Caco-2 (cell line): ENCODE measurements at regions of chr5 and their contacts with region 1.

Region 1: GRCh38 chr5:34656001-34656699 is at the start of gene RAI14:
- DNase-seq: peak; percentile 90 to 93
- H3K4me3 ChIP-seq: peak within 1 kb of the TSS; percentile 94
- H3K4me3 Mint-ChIP-seq: peak within 1 kb of the TSS; percentile 69
- H3K27ac Mint-ChIP-seq: peak within 1 kb of the TSS; percentile 48
- H3K4me1 ChIP-seq: peaks cover 12% of the 10 kb centered on the region; the same call in 1 of the 2 replicates
- H3K4me1 Mint-ChIP-seq: peaks cover 14% of the 10 kb centered on the region
- H3K27me3 ChIP-seq: no peaks in the 10 kb centered on the region
- H3K27me3 Mint-ChIP-seq: no peaks in the 10 kb centered on the region
- CTCF ChIP-seq: no peak
- total RNA-seq, gene RAI14: 71.5 and 73.9 TPM in 2 replicates

Region 2: DNA sequence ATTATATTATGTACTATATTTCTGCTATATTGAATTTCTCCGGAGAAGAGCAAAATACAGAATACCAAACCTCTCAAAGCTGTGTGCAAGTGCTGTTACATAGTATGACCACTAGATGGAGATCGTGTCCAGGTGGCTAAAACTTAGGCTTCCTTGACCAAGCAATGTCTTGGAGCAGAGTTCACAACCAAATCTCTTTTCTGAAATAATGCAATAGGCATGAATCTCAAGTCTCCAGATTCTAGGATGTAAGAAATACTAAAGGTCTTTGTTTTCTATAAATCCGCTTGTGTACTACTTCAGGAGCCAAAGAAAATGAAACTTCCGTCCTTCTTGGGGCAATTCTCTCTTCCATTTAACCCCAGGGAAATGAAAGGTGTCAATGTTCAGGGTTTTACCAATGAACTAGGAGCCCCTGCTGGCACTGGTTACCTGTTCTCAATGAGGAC is 181.6 kb before region 1 on chr5:
- CTCF ChIA-PET with region 1: no interaction called
- POLR2A ChIA-PET with region 1: no interaction called
- intact Hi-C with region 1: loop called (anchors 5 kb)
- DNase-seq: peak in 1 of 2 experiments; percentile 59
- H3K4me3 ChIP-seq: no peak overlapping the region
- H3K4me3 Mint-ChIP-seq: no peak overlapping the region
- H3K27ac Mint-ChIP-seq: no peak overlapping the region
- H3K4me1 ChIP-seq: 0 out of 2 replicates have a peak, but pooled peaks cover 7% of the 10 kb centered on the region
- H3K4me1 Mint-ChIP-seq: peaks cover 7% of the 10 kb centered on the region
- H3K27me3 ChIP-seq: no peaks in the 10 kb centered on the region
- H3K27me3 Mint-ChIP-seq: no peaks in the 10 kb centered on the region
- CTCF ChIP-seq: peak; percentile 91 to 95

Region 3: GRCh38 chr5:34609951-34610441 is 46.2 kb before region 1 on chr5:
- CTCF ChIA-PET with region 1: no interaction called
- POLR2A ChIA-PET with region 1: no interaction called
- intact Hi-C with region 1: no loop called
- DNase-seq: no peak
- H3K4me3 ChIP-seq: no peak overlapping the region
- H3K4me3 Mint-ChIP-seq: no peak overlapping the region
- H3K27ac Mint-ChIP-seq: no peak overlapping the region
- H3K4me1 ChIP-seq: no peaks in the 10 kb centered on the region
- H3K4me1 Mint-ChIP-seq: peaks cover 6% of the 10 kb centered on the region
- H3K27me3 ChIP-seq: no peaks in the 10 kb centered on the region
- H3K27me3 Mint-ChIP-seq: no peaks in the 10 kb centered on the region
- CTCF ChIP-seq: no peak

Region 4: DNA sequence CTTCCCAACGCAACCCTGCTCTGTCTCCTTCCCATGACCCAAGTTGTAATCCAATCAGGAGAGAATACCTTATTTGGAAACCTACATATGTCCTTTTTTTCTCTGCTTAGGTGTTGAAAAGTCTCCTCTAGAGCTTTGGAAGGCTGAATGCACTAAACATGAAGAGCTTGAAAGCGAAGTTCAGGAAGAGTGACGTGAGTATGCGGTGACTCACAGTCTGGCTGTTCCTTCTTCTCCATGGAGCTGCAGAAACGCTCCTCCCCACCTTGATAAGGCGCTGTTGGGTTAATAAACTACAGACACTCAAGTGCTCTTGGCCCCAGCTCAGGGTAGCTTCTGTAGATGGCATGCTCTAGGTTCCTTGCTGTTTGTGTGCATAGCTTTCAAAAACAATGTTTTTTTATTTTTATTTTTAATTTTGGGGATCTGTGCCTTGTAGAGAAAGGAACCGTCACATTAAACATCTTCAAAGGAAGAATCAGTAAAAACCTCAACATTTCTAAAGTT is 30.7 kb after region 1 on chr5:
- CTCF ChIA-PET with region 1: interaction called, 3 read pairs
- POLR2A ChIA-PET with region 1: interaction called, 15 read pairs
- intact Hi-C with region 1: loop called (anchors 1 kb)
- DNase-seq: peak; percentile 85 to 90
- H3K4me3 ChIP-seq: no peak overlapping the region
- H3K4me3 Mint-ChIP-seq: peak overlapping the region; percentile 67
- H3K27ac Mint-ChIP-seq: peak overlapping the region; percentile 88
- H3K4me1 ChIP-seq: peaks cover 53% of the 10 kb centered on the region
- H3K4me1 Mint-ChIP-seq: peaks cover 43% of the 10 kb centered on the region
- H3K27me3 ChIP-seq: no peaks in the 10 kb centered on the region
- H3K27me3 Mint-ChIP-seq: no peaks in the 10 kb centered on the region
- CTCF ChIP-seq: no peak

Region 5: GRCh38 chr5:34699155-34700077 is 43.3 kb after region 1 on chr5:
- CTCF ChIA-PET with region 1: no interaction called
- POLR2A ChIA-PET with region 1: no interaction called
- intact Hi-C with region 1: loop called (anchors 1 kb)
- DNase-seq: peak; percentile 83 to 87
- H3K4me3 ChIP-seq: no peak overlapping the region
- H3K4me3 Mint-ChIP-seq: peak overlapping the region; percentile 68
- H3K27ac Mint-ChIP-seq: peak overlapping the region; percentile 62
- H3K4me1 ChIP-seq: peaks cover 65% of the 10 kb centered on the region
- H3K4me1 Mint-ChIP-seq: peaks cover 50% of the 10 kb centered on the region
- H3K27me3 ChIP-seq: no peaks in the 10 kb centered on the region
- H3K27me3 Mint-ChIP-seq: no peaks in the 10 kb centered on the region
- CTCF ChIP-seq: no peak

Region 6: GRCh38 chr5:34731435-34732232 is 75.5 kb after region 1 on chr5:
- CTCF ChIA-PET with region 1: no interaction called
- POLR2A ChIA-PET with region 1: no interaction called
- intact Hi-C with region 1: no loop called
- DNase-seq: no peak
- H3K4me3 ChIP-seq: no peak overlapping the region
- H3K4me3 Mint-ChIP-seq: no peak overlapping the region
- H3K27ac Mint-ChIP-seq: peak overlapping the region; percentile 57
- H3K4me1 ChIP-seq: peaks cover 18% of the 10 kb centered on the region
- H3K4me1 Mint-ChIP-seq: no peaks in the 10 kb centered on the region
- H3K27me3 ChIP-seq: no peaks in the 10 kb centered on the region
- H3K27me3 Mint-ChIP-seq: no peaks in the 10 kb centered on the region
- CTCF ChIP-seq: no peak

Region 7: GRCh38 chr5:34756781-34757624 is 100.9 kb after region 1 on chr5:
- CTCF ChIA-PET with region 1: interaction called, 8 read pairs
- POLR2A ChIA-PET with region 1: no interaction called
- intact Hi-C with region 1: loop called (anchors 1 kb)
- DNase-seq: peak; percentile 66 to 77
- H3K4me3 ChIP-seq: no peak overlapping the region
- H3K4me3 Mint-ChIP-seq: peak overlapping the region; percentile 40
- H3K27ac Mint-ChIP-seq: peak overlapping the region; percentile 50
- H3K4me1 ChIP-seq: peaks cover 22% of the 10 kb centered on the region
- H3K4me1 Mint-ChIP-seq: peaks cover 38% of the 10 kb centered on the region
- H3K27me3 ChIP-seq: no peaks in the 10 kb centered on the region
- H3K27me3 Mint-ChIP-seq: no peaks in the 10 kb centered on the region
- CTCF ChIP-seq: no peak

Region 8: DNA sequence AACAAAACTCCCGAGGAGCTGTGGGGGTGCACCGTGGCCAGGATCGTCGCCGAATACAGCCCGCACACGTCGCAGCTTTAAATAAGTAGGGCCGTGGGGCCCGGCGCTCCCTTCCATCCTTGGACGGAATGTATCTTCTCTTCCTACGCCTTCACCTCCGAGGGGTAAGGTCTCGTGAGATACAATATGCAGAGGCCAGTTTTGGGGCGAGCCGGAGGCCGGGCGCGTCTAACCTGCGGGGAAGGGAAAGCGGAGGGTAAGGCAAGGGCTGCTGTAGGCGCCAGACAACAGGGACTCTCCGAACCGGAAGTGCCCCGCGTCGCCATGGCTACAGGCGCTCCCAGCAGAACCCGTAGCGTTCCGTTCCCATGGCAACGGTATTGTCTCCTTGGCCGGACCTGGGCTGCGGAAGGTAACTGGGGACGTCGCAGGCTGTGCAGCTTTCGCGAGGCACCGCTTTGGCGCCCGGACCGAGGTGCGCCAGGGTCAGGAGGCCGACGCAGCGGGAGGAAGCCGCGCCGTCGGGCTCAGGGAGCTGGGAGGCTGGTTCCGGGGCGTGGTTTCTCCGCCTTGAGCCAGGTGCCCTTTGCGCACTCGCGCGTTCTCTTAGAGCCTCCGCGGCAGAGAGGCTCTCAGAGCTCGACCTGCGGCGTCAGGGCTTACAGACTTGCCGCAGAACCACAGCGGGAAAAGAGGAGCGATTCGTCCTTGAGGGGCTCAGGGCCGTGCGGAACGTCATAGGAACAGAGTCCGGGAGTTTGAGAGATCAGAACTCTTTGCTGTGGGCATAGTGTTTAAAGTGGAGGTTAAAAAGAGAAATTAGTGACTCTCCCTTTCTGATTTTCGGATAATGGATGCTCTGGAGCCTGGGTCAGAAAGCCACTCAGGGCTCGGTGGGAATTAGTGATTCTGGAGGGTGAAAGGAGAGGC is 182.9 kb after region 1 on chr5 and contains the start of gene TTC23L:
- CTCF ChIA-PET with region 1: no interaction called
- POLR2A ChIA-PET with region 1: interaction called, 3 read pairs
- intact Hi-C with region 1: loop called (anchors 5 kb)
- DNase-seq: peak; percentile 92 to 93
- H3K4me3 ChIP-seq: peak within 1 kb of the TSS; percentile 72
- H3K4me3 Mint-ChIP-seq: peak within 1 kb of the TSS; percentile 86
- H3K27ac Mint-ChIP-seq: peak within 1 kb of the TSS; percentile 96
- H3K4me1 ChIP-seq: peaks cover 6% of the 10 kb centered on the region; the same call in 1 of the 2 replicates
- H3K4me1 Mint-ChIP-seq: peaks cover 13% of the 10 kb centered on the region
- H3K27me3 ChIP-seq: no peaks in the 10 kb centered on the region
- H3K27me3 Mint-ChIP-seq: no peaks in the 10 kb centered on the region
- CTCF ChIP-seq: no peak
- total RNA-seq, gene TTC23L: 0.09 and 0.72 TPM in 2 replicates

Region 9: GRCh38 chr5:34898258-34898895 is 242.2 kb after region 1 on chr5:
- CTCF ChIA-PET with region 1: interaction called, 4 read pairs
- POLR2A ChIA-PET with region 1: no interaction called
- intact Hi-C with region 1: loop called (anchors 2 kb)
- DNase-seq: peak; percentile 68 to 75
- H3K4me3 ChIP-seq: no peak overlapping the region
- H3K4me3 Mint-ChIP-seq: no peak overlapping the region
- H3K27ac Mint-ChIP-seq: peak overlapping the region; percentile 45
- H3K4me1 ChIP-seq: peaks cover 15% of the 10 kb centered on the region; the same call in 1 of the 2 replicates
- H3K4me1 Mint-ChIP-seq: no peaks in the 10 kb centered on the region
- H3K27me3 ChIP-seq: no peaks in the 10 kb centered on the region
- H3K27me3 Mint-ChIP-seq: no peaks in the 10 kb centered on the region
- CTCF ChIP-seq: peak; percentile 85 to 93

Region 10: DNA sequence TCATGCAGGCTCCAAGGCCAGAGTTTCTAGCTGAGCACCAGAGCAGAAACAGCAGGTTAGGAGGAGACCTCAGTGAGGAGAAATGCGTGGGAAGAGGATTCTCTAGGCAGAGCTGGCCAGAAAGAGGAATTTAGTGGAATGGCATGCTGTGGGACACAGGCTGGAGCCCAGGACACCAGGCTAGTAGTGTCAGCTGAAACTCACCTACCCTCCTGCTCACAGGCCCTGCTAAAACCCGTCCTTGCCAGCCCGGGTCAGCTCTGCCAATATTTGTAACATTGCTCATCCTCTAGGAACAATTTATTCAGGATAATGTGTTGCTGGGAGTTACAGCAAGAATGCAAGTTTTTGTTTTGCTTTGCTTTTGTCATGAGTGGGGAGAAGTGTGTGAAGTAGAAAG is 431.8 kb after region 1 on chr5:
- CTCF ChIA-PET with region 1: no interaction called
- POLR2A ChIA-PET with region 1: no interaction called
- intact Hi-C with region 1: no loop called
- DNase-seq: no peak
- H3K4me3 ChIP-seq: no peak overlapping the region
- H3K4me3 Mint-ChIP-seq: no peak overlapping the region
- H3K27ac Mint-ChIP-seq: no peak overlapping the region
- H3K4me1 ChIP-seq: no peaks in the 10 kb centered on the region
- H3K4me1 Mint-ChIP-seq: no peaks in the 10 kb centered on the region
- H3K27me3 ChIP-seq: 0 out of 2 replicates have a peak, but pooled peaks cover 1% of the 10 kb centered on the region
- H3K27me3 Mint-ChIP-seq: peaks cover 2% of the 10 kb centered on the region
- CTCF ChIP-seq: no peak